ENCODE measurements at regions of chr9 and their contacts with region 1.

Region 1: DNA sequence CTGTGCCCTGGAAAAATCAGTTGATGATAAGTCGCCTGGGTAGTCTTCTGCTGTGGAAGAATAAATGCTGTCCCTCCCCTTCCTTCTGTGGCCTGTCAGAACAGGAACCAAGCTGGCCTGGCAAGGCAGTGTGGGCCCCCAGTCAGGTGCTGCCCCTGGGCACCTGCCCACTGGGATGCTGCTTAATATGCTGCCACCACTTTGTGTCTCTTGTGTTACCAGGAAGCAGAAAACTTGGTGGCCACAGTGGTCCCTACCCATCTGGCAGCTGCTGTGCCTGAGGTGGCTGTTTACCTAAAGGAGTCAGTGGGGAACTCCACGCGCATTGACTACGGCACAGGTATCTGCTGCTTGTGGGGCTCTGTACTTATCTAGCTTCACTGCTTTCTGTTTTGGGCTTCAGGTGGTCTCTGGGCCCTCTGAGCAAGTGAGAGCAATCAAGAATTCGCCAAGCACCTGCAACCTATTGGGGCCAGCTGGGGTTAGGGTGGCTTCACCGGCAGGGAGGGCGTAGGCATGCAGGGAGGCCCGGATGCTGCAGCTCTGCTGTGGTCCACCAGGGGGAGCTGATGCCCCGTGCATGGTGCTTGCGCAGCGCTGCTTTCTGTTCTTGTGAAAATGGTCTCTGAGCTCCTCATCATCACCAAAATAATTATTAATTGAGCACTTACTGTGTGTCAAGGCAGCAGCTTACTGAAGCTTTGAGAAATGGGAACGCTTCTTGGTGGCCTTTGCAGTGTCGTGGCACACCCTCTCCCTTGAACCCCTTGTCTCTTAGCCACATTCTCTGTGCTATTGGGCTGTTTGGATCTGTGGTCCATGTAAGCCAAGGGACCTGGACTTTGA is 20.3 kb downstream of the PTPA start:
- DNase-seq: peak; percentile 77
- ATAC-seq: peak; percentile 100
- H3K4me3 Mint-ChIP-seq: no peak overlapping the region
- H3K27ac Mint-ChIP-seq: no peak overlapping the region
- H3K4me1 Mint-ChIP-seq: peaks cover 10% of the 10 kb centered on the region
- H3K27me3 Mint-ChIP-seq: no peaks in the 10 kb centered on the region
- CTCF ChIP-seq: peak; percentile 83

Region 2: GRCh38 chr9:129584136-129584535 is 452.6 kb after region 1 on chr9:
- CTCF ChIA-PET with region 1: no interaction called
- POLR2A ChIA-PET with region 1: no interaction called
- intact Hi-C with region 1: no loop called
- DNase-seq: no peak
- ATAC-seq: peak; percentile 74
- H3K4me3 Mint-ChIP-seq: no peak overlapping the region
- H3K27ac Mint-ChIP-seq: no peak overlapping the region
- H3K4me1 Mint-ChIP-seq: peaks cover 23% of the 10 kb centered on the region
- H3K27me3 Mint-ChIP-seq: peaks cover 9% of the 10 kb centered on the region
- CTCF ChIP-seq: no peak

Region 3: DNA sequence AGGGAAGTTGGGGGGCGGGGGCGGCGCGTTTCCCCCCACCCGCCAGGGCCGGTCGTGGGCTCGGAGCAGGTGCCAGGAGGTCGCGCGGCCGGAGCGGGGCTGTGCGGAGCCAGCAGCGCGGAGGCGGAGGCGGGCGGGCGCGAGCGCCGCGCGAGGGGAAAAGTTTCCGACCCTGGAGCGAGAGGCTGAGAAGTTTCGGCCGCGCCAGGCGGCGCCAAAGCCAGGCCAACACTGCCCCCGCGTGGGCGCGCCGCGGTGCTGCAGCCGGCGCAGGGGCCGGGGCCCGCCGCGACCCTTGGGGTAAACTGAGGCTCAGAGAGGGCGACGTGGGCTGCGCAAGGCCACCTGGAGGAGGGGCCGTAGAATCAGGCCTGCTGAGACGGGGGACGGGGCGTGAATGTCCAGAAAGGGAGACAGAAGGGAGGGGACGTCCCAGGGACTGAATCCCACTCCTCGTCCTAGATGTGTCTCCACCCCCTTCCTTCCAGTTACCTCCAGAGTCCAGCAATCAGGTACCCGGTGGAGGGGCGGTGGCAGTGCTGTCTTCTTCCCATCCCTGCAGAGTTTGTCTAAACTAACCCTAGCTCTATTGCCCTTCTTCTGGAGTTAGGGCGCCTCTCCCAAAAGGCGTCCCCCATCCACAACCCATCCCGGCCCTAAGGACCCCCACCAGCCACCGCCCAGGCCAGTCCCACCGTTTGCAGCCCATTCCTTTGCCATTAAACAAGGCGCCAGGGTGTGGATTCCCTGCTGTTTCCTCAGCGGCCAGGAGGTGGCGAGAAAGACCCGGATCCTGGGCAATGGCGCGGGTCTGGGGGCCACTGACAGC is 479.2 kb after region 1 on chr9:
- CTCF ChIA-PET with region 1: interaction called, 38 read pairs
- POLR2A ChIA-PET with region 1: interaction called, 4 read pairs
- intact Hi-C with region 1: loop called (anchors 1 kb)
- DNase-seq: peak; percentile 75
- ATAC-seq: peak; percentile 82
- H3K4me3 Mint-ChIP-seq: peak overlapping the region; percentile 81
- H3K27ac Mint-ChIP-seq: peak overlapping the region; percentile 41
- H3K4me1 Mint-ChIP-seq: peaks cover 24% of the 10 kb centered on the region
- H3K27me3 Mint-ChIP-seq: peaks cover 2% of the 10 kb centered on the region
- CTCF ChIP-seq: peak; percentile 37

Region 4: DNA sequence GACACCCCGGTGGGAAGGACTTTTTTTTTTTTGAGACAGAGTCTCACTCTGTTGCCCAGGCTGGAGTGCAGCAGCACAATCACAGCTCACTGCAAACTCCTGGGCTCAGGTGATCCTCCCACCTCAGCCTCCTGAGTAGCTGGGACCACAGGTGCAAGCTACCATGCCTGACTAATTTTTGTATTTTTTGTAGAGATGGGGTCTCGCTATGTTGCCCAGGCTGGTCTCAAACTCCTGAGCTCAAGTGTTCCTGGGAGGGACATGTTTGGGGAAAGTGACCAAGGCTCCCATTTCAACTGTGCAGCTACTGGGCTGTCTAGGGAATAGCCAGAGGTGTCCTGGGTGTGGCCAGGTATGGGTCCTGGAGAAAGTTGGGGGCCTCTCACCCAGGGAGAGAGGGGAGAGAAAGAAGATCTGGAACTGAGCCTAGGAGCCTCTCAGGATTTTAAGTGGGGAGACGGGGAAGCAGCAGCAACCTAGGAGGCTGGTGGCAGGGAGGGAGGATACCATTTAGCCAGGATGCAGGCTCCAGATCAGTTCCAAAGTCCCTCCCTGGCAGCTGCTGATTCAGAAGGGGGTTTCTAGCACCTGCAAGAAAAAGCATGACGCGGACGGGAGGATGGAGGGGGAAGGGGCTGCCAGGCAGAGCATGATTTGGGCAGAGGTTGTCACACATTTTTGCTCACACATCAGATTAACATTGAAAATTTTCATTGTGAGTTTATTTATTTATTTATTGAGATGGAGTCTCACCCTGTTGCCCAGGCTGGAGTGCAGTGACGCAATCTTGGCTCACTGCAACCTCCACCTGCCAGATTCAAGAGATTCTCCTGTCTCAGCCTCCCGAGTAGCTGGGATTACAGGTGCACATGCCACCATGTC is 664.7 kb after region 1 on chr9:
- CTCF ChIA-PET with region 1: interaction called, 15 read pairs
- POLR2A ChIA-PET with region 1: no interaction called
- intact Hi-C with region 1: no loop called
- DNase-seq: no peak
- ATAC-seq: no peak
- H3K4me3 Mint-ChIP-seq: no peak overlapping the region
- H3K27ac Mint-ChIP-seq: no peak overlapping the region
- H3K4me1 Mint-ChIP-seq: no peaks in the 10 kb centered on the region
- H3K27me3 Mint-ChIP-seq: peaks cover 9% of the 10 kb centered on the region
- CTCF ChIP-seq: no peak

Measured in activated B cell treated with CpG ODN at 0.5 μM for 24 hours (primary cell).